ENCODE measurements at regions of chr5 and their contacts with region 1.

Region 1: GRCh38 chr5:56838409-56839039 is 23.2 kb downstream of the MAP3K1 start:
- DNase-seq: no peak
- ATAC-seq: peak; percentile 68

Region 2: GRCh38 chr5:56270568-56271392 is 567.7 kb before region 1 on chr5:
- intact Hi-C with region 1: loop called (anchors 1 kb)
- DNase-seq: peak; percentile 83
- ATAC-seq: peak; percentile 99

Region 3: GRCh38 chr5:56588636-56589480 is 249.7 kb before region 1 on chr5:
- intact Hi-C with region 1: no loop called
- DNase-seq: peak; percentile 84
- ATAC-seq: peak; percentile 77

Region 4: DNA sequence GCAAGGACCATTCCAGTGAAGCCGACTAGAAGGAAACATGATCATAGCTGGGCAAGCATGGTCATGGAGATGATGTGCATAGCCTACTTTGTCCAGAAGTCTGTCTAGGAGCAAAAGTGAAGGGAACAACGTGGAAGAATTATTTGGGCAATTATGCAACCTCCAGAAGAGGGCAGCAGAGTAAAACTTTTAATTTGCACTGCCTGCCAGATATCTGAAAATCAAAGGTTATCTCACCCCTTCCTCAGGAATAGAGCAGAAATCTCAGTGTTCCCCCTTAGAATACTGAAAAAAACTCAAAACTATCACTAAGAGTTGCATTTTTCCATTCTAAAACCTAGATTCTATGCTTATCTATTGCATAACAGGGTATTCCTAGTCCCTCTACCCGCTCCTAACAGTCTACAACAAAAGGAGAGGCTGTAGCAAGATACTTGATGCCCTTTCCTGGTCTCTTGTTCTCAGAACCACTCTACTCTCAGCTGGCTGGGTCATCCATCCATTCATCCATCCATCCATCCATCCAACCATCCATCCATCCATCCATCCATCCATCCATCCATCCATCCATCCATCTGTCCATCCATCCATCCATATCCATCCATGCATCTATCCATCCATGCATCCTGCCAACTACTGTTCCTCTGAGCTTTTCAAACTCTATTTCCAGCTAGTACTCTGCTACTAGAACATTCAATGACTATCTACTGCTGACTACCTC is 62.5 kb after region 1 on chr5:
- intact Hi-C with region 1: no loop called
- DNase-seq: no peak
- ATAC-seq: peak; percentile 74